Activated naive CD4-positive, alpha-beta T cell treated with anti-CD3 and anti-CD28 coated beads for 36 hours (primary cell): ENCODE measurements at regions of chr12 and their contacts with region 1.

Region 1: GRCh38 chr12:12349711-12350665 is at the start of gene MANSC1:
- DNase-seq: peak; percentile 80
- H3K4me3 Mint-ChIP-seq: peak within 1 kb of the TSS; percentile 70
- H3K27ac Mint-ChIP-seq: peak within 1 kb of the TSS; percentile 48
- H3K4me1 Mint-ChIP-seq: peaks cover 24% of the 10 kb centered on the region
- H3K27me3 Mint-ChIP-seq: no peaks in the 10 kb centered on the region
- total RNA-seq, gene MANSC1: 3.5 TPM

Region 2: GRCh38 chr12:12334367-12335040 is 15.5 kb before region 1 on chr12:
- CTCF ChIA-PET with region 1: interaction called, 50 read pairs
- intact Hi-C with region 1: no loop called
- DNase-seq: peak; percentile 74
- H3K4me3 Mint-ChIP-seq: no peak overlapping the region
- H3K27ac Mint-ChIP-seq: no peak overlapping the region
- H3K4me1 Mint-ChIP-seq: peaks cover 27% of the 10 kb centered on the region
- H3K27me3 Mint-ChIP-seq: no peaks in the 10 kb centered on the region

Region 3: GRCh38 chr12:12376646-12377448 is 26.9 kb after region 1 on chr12:
- CTCF ChIA-PET with region 1: no interaction called
- intact Hi-C with region 1: no loop called
- DNase-seq: peak; percentile 33
- H3K4me3 Mint-ChIP-seq: no peak overlapping the region
- H3K27ac Mint-ChIP-seq: peak overlapping the region; percentile 30
- H3K4me1 Mint-ChIP-seq: peaks cover 37% of the 10 kb centered on the region
- H3K27me3 Mint-ChIP-seq: no peaks in the 10 kb centered on the region

Region 4: GRCh38 chr12:12916135-12916944 is 566.4 kb after region 1 on chr12:
- CTCF ChIA-PET with region 1: no interaction called
- intact Hi-C with region 1: no loop called
- DNase-seq: peak; percentile 94
- H3K4me3 Mint-ChIP-seq: no peak overlapping the region
- H3K27ac Mint-ChIP-seq: no peak overlapping the region
- H3K4me1 Mint-ChIP-seq: peaks cover 7% of the 10 kb centered on the region
- H3K27me3 Mint-ChIP-seq: peaks cover 6% of the 10 kb centered on the region